Posterior vena cava (tissue), 2 donors: ENCODE measurements at regions of chr1 and their contacts with region 1.

Region 1: GRCh38 chr1:204706838-204707509 is 21.4 kb upstream of the LRRN2 start:
- DNase-seq: no peak

Region 2: GRCh38 chr1:204775546-204775945 is 68.6 kb after region 1 on chr1:
- intact Hi-C with region 1: loop called in 1 of 2 experiments (anchors 2 kb)
- DNase-seq: no peak